Astrocyte of the cerebellum (primary cell): ENCODE measurements at regions of chr10 and their contacts with region 1.

Region 1: DNA sequence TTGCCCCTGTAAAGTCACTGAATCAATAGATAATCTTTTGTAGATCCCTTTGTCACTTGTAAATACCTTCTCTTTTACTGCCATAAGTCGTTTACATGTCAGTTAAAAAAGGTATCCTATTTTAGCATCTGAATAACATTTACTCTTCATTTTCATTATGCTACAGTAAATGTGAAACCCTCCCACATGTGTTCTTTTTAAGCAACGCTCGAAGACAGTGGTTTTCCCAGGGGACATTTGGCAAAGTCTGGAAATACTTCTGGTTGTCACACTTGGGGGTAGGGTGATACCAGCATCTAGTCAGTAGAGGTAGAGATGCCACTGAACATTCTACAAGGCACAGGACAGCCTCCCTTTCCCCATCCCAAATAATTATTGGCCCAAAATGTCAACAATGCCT is 23.7 kb downstream of the ATAD1 start:
- DNase-seq: no peak
- H3K4me3 ChIP-seq: no peak overlapping the region
- CTCF ChIP-seq: no peak

Region 2: GRCh38 chr10:87715552-87716347 is 78.5 kb before region 1 on chr10:
- in situ Hi-C with region 1: no loop called
- DNase-seq: no peak
- H3K4me3 ChIP-seq: no peak overlapping the region
- CTCF ChIP-seq: no peak

Region 3: GRCh38 chr10:87757685-87758084 is 36.6 kb before region 1 on chr10:
- in situ Hi-C with region 1: loop called (anchors 5 kb)
- DNase-seq: no peak
- H3K4me3 ChIP-seq: no peak overlapping the region
- CTCF ChIP-seq: no peak